Heart right ventricle (tissue), 16 donors: ENCODE measurements at regions of chr2 and their contacts with region 1.

Region 1: DNA sequence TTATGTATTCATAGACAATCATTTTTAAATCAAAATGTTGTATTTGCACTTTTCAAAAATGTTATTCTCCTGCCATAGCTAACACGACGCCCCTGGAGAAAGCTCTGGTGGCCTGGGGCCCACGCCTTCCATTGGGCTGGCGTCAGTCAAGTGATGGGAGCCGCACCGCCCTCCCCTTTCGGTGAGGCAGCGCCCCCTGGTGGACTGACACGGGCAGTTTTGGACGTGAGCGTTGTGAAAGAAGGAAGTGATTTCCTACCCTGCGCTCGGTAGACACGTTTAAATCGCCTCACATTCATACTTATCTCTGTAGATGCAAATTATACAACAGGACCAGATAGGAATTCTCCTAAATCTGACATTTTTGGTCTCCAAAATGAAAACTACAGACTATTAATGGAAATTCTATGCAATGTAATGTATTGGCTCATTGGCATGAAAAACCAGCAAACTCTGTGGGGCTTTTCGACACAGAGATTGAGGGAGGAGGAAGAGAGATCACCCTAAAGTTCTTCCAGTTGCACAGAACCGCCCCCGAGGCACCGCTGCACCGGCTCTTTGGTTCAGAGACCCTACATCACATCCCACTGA is 326.2 kb upstream of the SOX11 start:
- DNase-seq: peak; percentile 45 to 63
- ATAC-seq: peak in 7 of 8 donors; percentile 61 to 83 (median 71)
- H3K4me3 ChIP-seq: no peak overlapping the region
- H3K27ac ChIP-seq: no peak overlapping the region
- H3K4me1 ChIP-seq: no peaks in the 10 kb centered on the region
- H3K27me3 ChIP-seq: peaks cover 0 to 5% (median 0%) of the 10 kb centered on the region in 7 donors
- CTCF ChIP-seq: peak; percentile 69 to 84 (median 77)

Region 2: DNA sequence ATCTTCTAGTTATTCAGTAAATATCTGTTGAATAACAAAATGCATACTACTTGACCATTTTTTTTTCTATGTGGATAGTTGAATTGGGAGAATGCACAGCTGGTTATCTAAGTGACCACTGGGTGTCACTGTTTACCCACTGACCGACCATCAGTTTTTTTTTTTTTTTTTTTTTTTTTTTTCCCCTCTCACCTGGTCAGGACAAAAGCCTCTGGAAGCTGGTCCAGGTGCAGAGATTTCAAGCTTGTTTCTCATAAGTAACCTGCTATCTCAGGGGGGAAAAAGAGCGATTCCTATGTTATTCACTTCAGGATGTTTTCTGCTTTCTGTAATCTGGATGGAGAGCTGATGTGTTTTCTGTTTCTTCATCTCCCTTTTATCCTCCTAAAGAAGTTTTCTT is 1406.6 kb before region 1 on chr2:
- intact Hi-C with region 1: loop called in 1 of 10 experiments (anchors 10 kb)
- DNase-seq: no peak
- ATAC-seq: no peak
- H3K4me3 ChIP-seq: no peak overlapping the region
- H3K27ac ChIP-seq: no peak overlapping the region
- H3K4me1 ChIP-seq: no peaks in the 10 kb centered on the region
- H3K27me3 ChIP-seq: peaks cover 0 to 36% (median 5%) of the 10 kb centered on the region in 7 donors
- CTCF ChIP-seq: peak; percentile 63 to 82 (median 73)

Region 3: GRCh38 chr2:4992226-4992625 is 373.7 kb before region 1 on chr2:
- intact Hi-C with region 1: loop called in 6 of 10 experiments (anchors 5 to 10 kb)
- DNase-seq: peak in 1 of 2 donors; percentile 8
- ATAC-seq: peak in 2 of 8 donors; percentile 38 to 72
- H3K4me3 ChIP-seq: no peak overlapping the region
- H3K27ac ChIP-seq: no peak overlapping the region
- H3K4me1 ChIP-seq: no peaks in the 10 kb centered on the region
- H3K27me3 ChIP-seq: peaks cover 0 to 4% (median 0%) of the 10 kb centered on the region in 7 donors
- CTCF ChIP-seq: peak in 7 of 9 donors; percentile 23 to 58 (median 44)

Region 4: DNA sequence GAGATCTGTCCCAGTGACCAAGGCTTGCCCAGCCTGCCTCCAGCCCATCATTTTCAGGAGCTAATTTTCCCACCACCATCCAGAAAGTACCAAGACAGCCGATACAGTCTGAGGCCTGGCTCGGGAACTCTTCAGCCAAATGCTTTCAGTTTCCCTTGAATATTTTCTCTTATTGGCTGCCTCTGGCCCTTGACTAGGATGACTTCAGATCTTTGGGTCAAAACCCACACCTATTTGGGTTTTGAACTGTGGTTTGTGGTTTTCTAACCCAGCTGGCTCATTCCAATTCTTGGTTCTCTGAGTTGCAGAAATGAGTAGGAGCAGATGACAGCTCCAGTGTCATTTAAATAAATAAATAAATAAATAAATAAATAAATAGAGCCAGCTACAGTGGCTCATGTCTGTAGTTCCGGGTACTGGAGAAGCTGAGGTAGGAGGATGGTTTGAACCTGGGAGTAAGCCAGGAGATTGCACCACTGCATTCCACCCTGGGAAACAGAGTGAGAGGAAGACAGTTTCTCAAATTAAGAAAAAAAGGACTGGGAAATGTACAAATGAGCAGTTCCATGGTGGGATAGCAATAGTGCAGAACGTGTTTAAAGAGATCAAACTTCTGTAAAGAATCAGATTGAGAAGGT is 138.8 kb before region 1 on chr2:
- intact Hi-C with region 1: no loop called
- DNase-seq: no peak
- ATAC-seq: no peak
- H3K4me3 ChIP-seq: no peak overlapping the region
- H3K27ac ChIP-seq: no peak overlapping the region
- H3K4me1 ChIP-seq: no peaks in the 10 kb centered on the region
- H3K27me3 ChIP-seq: peaks cover 0 to 7% (median 0%) of the 10 kb centered on the region in 7 donors
- CTCF ChIP-seq: no peak

Region 5: DNA sequence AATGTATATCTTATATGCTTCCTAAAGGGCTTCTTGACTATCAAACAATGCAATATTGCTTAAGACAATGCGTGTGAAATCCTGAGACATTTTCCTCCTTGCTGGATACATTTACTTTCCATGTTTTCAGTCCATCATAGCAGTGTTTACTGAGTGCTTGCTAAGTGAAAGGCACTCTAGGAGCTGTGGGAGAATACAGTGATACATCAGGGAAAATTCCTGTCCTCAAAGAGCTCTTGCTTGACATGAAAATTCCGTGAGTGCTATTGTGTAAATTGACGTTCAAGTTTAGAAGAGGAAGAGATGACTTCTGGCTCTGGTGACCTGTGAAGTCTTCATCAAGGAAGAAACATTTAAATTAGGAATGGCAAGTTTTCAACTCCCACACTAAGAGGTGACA is 123.2 kb before region 1 on chr2:
- intact Hi-C with region 1: no loop called
- DNase-seq: no peak
- ATAC-seq: no peak
- H3K4me3 ChIP-seq: no peak overlapping the region
- H3K27ac ChIP-seq: no peak overlapping the region
- H3K4me1 ChIP-seq: no peaks in the 10 kb centered on the region
- H3K27me3 ChIP-seq: peaks cover 0 to 4% (median 0%) of the 10 kb centered on the region in 7 donors
- CTCF ChIP-seq: no peak

Region 6: DNA sequence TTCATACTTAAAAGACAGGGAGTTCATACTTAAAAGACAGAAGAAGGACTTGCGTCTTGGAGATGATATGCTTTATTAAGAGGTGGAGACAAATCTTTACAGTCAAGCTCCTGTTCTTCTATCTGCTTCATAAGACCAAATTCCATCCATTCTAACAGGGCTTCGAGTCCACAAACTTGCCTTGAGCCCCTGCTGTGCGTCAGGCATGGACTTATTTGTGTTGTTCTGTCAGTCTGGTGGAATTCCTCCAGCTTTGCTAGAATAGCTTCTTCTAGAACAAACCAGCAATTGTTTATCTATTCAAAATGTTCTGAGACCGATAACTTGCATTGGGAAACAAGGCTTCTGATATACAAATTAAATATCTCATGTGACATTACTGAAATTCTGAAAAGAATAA is 252.3 kb after region 1 on chr2:
- intact Hi-C with region 1: no loop called
- DNase-seq: no peak
- ATAC-seq: no peak
- H3K4me3 ChIP-seq: no peak overlapping the region
- H3K27ac ChIP-seq: no peak overlapping the region
- H3K4me1 ChIP-seq: no peaks in the 10 kb centered on the region
- H3K27me3 ChIP-seq: no peaks in the 10 kb centered on the region
- CTCF ChIP-seq: no peak

Region 7: DNA sequence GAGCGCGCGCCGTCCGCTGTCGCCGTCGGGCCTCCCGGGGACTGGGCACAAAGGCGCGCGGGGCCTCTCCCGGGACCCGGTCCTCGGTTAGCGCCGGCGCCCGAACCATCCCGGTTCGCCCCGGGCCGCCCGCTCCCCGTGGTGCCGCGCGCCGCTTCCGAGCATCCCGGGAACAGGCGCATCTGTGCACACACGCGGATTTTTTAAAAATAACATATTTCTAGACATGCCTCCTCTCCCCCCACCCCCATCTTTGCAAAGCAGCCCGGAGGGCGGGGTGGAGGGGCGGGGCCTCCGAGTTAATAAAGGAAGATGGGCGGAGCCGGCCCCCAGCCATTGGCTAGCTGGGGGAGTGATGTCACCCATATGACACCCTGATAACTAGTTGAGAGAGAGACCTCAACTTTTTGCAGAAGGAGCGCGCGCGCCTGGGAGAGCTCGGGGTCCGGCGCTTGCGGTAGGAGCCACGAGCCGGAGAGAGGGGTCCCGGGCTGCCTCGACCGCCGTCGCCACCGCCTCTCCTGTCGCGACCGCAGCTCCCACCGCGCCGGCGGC is 326.1 kb after region 1 on chr2 and contains the start of gene SOX11:
- intact Hi-C with region 1: loop called in 1 of 10 experiments (anchors 10 kb)
- DNase-seq: peak; percentile 57 to 58
- ATAC-seq: peak in 7 of 8 donors; percentile 54 to 77 (median 65)
- H3K4me3 ChIP-seq: peak within 1 kb of the TSS in 9 of 10 donors; percentile 8 to 50 (median 37)
- H3K27ac ChIP-seq: peak within 1 kb of the TSS in 1 of 10 donors; percentile 43
- H3K4me1 ChIP-seq: peaks cover 2 to 40% (median 30%) of the 10 kb centered on the region in 9 donors
- H3K27me3 ChIP-seq: peaks cover 20 to 88% (median 80%) of the 10 kb centered on the region in 7 donors
- CTCF ChIP-seq: no peak
- total RNA-seq, gene SOX11: 0.25 to 5.8 (median 1.4) TPM

Region 8: GRCh38 chr2:6053743-6054142 is 687.8 kb after region 1 on chr2:
- intact Hi-C with region 1: no loop called
- DNase-seq: no peak
- ATAC-seq: no peak
- H3K4me3 ChIP-seq: no peak overlapping the region
- H3K27ac ChIP-seq: no peak overlapping the region
- H3K4me1 ChIP-seq: no peaks in the 10 kb centered on the region
- H3K27me3 ChIP-seq: no peaks in the 10 kb centered on the region
- CTCF ChIP-seq: no peak